ENCODE measurements at regions of chr5 and their contacts with region 1.

Region 1: GRCh38 chr5:109479260-109479860 is 69.6 kb upstream of the PJA2 start:
- DNase-seq: peak; percentile 34
- ATAC-seq: no peak
- H3K4me3 ChIP-seq: no peak overlapping the region
- H3K27ac ChIP-seq: no peak overlapping the region
- H3K4me1 ChIP-seq: no peaks in the 10 kb centered on the region
- H3K27me3 ChIP-seq: peaks cover 3% of the 10 kb centered on the region
- CTCF ChIP-seq: peak; percentile 54
- POLR2A ChIP-seq: no peak
- RAD21 ChIP-seq: peak; percentile 54

Region 2: DNA sequence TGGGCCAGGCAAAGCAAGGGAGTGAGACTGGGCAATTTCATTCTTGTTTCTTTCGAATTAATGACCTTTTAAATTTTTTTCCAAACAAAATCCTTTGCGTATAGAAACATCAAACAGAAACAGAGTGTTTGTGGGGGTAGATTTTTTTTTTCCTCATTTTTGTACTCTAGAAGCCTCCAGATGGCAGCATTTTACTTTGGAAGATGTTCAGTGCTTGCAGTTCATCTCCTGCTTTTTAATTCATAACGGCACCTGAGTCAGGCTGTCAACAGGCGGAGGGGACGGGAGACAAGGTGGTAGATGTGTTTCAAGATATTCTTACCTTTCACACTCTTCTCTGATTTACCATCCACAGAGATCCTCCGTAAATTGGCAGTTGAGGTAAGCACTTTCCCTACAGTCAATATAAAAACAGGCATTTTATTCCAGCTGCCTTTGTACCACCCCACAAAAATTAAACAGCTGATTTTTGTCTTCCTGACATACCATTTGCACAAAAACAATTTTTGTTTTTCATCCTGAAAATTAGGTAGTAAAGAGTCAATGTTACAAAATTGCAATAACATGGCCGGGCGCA is 997.9 kb before region 1 on chr5:
- CTCF ChIA-PET with region 1: no interaction called
- POLR2A ChIA-PET with region 1: no interaction called
- dilution Hi-C with region 1: no loop called
- in situ Hi-C with region 1: no loop called
- intact Hi-C with region 1: loop called (anchors 1 kb)
- DNase-seq: peak; percentile 42
- ATAC-seq: peak; percentile 59; the same call in 1 of the 2 replicates
- H3K4me3 ChIP-seq: no peak overlapping the region
- H3K27ac ChIP-seq: no peak overlapping the region
- H3K4me1 ChIP-seq: no peaks in the 10 kb centered on the region
- H3K27me3 ChIP-seq: no peaks in the 10 kb centered on the region; the same call in 1 of the 2 replicates
- CTCF ChIP-seq: peak; percentile 55
- POLR2A ChIP-seq: no peak
- RAD21 ChIP-seq: peak; percentile 64

Region 3: GRCh38 chr5:108521841-108522506 is 957.4 kb before region 1 on chr5:
- CTCF ChIA-PET with region 1: no interaction called
- POLR2A ChIA-PET with region 1: no interaction called
- dilution Hi-C with region 1: no loop called
- in situ Hi-C with region 1: no loop called
- intact Hi-C with region 1: loop called (anchors 5 kb)
- DNase-seq: peak; percentile 72
- ATAC-seq: peak; percentile 98
- H3K4me3 ChIP-seq: no peak overlapping the region
- H3K27ac ChIP-seq: no peak overlapping the region
- H3K4me1 ChIP-seq: peaks cover 3% of the 10 kb centered on the region
- H3K27me3 ChIP-seq: peaks cover 2% of the 10 kb centered on the region; the same call in 1 of the 2 replicates
- CTCF ChIP-seq: peak; percentile 76
- POLR2A ChIP-seq: no peak
- RAD21 ChIP-seq: peak; percentile 86

Region 4: DNA sequence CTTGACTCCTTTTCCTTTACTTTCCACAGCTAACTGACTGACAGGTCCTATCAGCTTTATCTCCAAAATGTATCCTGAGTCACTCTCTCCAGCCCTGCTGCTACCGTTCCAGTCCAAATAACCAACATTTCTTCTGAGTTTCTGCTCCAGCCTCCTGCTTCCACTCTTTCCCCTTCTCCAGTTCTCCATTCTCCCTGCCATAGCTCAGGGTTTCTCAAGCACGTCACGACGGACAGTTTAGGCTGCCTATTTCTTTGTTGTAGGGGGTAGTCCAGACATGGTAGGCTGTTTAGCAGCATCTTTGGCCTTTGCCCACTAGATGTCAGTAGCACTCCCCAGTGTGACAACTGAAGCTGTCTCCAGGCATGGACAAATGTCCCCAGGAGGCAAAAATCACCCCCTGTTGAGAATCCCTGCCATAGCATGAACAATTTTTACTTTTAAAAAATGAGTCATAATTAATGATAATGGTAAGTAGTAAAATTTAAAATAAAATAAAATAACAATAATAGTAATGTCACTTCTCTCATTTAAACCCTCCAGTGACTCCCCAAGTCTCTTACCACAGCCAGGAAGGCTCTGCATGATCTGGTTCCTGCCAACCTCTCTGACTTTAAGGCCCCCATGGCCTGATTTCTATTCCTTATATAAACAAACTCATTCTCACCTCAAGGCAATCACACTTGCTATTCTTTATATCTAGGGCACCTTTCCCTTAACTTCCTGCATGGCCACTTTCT is 837.0 kb before region 1 on chr5:
- CTCF ChIA-PET with region 1: no interaction called
- POLR2A ChIA-PET with region 1: no interaction called
- dilution Hi-C with region 1: no loop called
- in situ Hi-C with region 1: no loop called
- intact Hi-C with region 1: loop called (anchors 5 kb)
- DNase-seq: peak; percentile 69
- ATAC-seq: peak; percentile 96
- H3K4me3 ChIP-seq: no peak overlapping the region
- H3K27ac ChIP-seq: no peak overlapping the region
- H3K4me1 ChIP-seq: peaks cover 2% of the 10 kb centered on the region; the same call in 1 of the 2 replicates
- H3K27me3 ChIP-seq: no peaks in the 10 kb centered on the region
- CTCF ChIP-seq: peak; percentile 88
- POLR2A ChIP-seq: no peak
- RAD21 ChIP-seq: peak; percentile 89

Region 5: DNA sequence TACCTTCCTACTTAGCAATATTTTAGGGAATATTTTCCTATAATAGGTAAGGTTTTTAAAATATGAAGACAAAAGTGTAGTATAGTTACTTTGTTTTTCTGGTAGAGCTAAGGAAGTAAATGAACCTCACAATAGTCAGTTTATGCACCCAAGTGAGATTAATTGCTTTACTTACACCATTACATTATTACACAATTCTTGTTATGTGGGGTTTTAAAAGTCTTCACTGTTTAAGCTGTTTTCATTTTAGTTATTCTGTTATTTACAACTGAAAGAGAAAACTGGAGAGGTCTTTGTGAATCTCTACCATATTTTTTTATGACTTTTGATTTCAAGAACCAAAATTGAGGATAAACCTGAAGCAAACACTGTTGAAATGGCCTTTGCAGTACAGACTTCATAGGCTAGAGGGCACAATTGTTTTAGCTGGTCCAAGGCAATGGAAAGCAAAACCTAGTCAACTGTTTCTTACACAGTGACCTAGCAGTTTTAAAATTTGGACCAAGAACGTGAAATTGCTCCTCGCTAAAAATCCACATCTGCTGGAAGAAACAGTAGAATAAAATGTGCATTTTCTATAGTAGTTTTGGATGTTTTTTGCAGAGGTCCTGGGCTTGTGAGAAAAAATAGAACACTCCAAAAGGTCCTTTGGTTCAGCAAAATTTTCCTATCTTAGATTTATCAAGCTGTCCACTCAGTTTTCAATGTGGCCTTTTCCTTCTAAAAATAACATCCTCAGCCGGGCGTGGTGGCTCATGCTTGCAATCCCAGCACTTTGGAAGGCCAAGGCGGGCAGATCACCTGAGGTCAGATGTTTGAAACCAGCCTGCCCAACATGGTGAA is 798.1 kb before region 1 on chr5:
- CTCF ChIA-PET with region 1: no interaction called
- POLR2A ChIA-PET with region 1: no interaction called
- dilution Hi-C with region 1: no loop called
- in situ Hi-C with region 1: no loop called
- intact Hi-C with region 1: loop called (anchors 5 kb)
- DNase-seq: peak; percentile 78
- ATAC-seq: peak; percentile 95
- H3K4me3 ChIP-seq: no peak overlapping the region
- H3K27ac ChIP-seq: no peak overlapping the region
- H3K4me1 ChIP-seq: no peaks in the 10 kb centered on the region
- H3K27me3 ChIP-seq: peaks cover 7% of the 10 kb centered on the region
- CTCF ChIP-seq: peak; percentile 89
- POLR2A ChIP-seq: no peak
- RAD21 ChIP-seq: peak; percentile 88

Region 6: DNA sequence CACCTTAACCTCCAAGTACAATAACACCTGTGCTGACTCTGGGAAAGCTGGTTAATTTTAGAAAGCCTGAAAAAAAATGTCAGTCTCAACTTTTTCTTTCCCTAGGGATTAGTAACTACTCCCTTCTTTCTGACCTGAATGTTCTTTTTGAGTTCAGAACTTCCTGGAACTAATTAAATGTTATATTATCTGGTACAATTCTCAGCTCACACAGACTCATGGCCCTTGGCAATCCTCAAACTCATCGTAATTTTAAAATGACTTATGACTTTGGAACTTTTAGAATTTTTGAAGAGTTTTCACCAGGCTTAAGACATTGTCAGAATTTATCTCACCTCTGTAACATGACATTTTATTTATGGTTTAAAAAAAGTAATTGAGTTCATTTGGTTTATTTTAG is 416.7 kb before region 1 on chr5:
- CTCF ChIA-PET with region 1: no interaction called
- POLR2A ChIA-PET with region 1: no interaction called
- dilution Hi-C with region 1: no loop called
- in situ Hi-C with region 1: no loop called
- intact Hi-C with region 1: loop called (anchors 10 kb)
- DNase-seq: no peak
- ATAC-seq: no peak
- H3K4me3 ChIP-seq: no peak overlapping the region
- H3K27ac ChIP-seq: no peak overlapping the region
- H3K4me1 ChIP-seq: no peaks in the 10 kb centered on the region
- H3K27me3 ChIP-seq: no peaks in the 10 kb centered on the region
- CTCF ChIP-seq: no peak
- POLR2A ChIP-seq: no peak
- RAD21 ChIP-seq: no peak

Region 7: GRCh38 chr5:109805472-109805871 is 326.1 kb after region 1 on chr5:
- CTCF ChIA-PET with region 1: no interaction called
- POLR2A ChIA-PET with region 1: interaction called, 12 read pairs
- dilution Hi-C with region 1: no loop called
- in situ Hi-C with region 1: no loop called
- intact Hi-C with region 1: no loop called
- DNase-seq: peak; percentile 33
- ATAC-seq: peak; percentile 81
- H3K4me3 ChIP-seq: no peak overlapping the region
- H3K27ac ChIP-seq: no peak overlapping the region
- H3K4me1 ChIP-seq: peaks cover 4% of the 10 kb centered on the region
- H3K27me3 ChIP-seq: no peaks in the 10 kb centered on the region
- CTCF ChIP-seq: no peak
- POLR2A ChIP-seq: no peak
- RAD21 ChIP-seq: no peak

Region 8: DNA sequence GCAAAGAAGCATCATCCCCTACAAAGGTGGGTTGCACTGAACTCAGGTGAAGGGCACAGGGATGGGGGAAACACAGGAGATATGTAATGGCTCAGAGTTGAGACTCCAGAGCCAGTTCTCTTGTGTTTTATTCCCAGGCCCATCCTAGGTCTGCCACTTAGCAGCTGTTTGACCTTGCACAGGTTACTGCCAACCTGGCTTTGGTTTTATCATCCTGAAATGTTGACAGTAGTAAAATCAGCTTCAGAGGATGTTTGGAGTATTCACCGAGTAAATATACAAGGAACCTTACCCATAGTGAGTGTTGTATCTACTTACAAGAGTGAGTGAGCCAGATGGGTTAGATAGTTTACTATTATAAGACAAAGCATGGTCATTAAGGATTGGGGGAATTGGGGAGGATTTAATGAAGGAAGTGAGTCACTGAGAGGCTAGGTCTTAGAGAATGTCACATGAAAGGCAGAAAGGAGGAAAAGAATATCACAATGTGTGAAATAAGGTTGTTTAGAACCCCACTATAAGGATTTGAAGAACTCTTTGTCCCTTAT is 351.7 kb after region 1 on chr5:
- CTCF ChIA-PET with region 1: no interaction called
- POLR2A ChIA-PET with region 1: no interaction called
- dilution Hi-C with region 1: no loop called
- in situ Hi-C with region 1: no loop called
- intact Hi-C with region 1: no loop called
- DNase-seq: peak; percentile 76
- ATAC-seq: peak; percentile 53
- H3K4me3 ChIP-seq: no peak overlapping the region
- H3K27ac ChIP-seq: peak overlapping the region; percentile 64; the same call in 1 of the 2 replicates
- H3K4me1 ChIP-seq: peaks cover 5% of the 10 kb centered on the region
- H3K27me3 ChIP-seq: no peaks in the 10 kb centered on the region
- CTCF ChIP-seq: no peak
- POLR2A ChIP-seq: no peak
- RAD21 ChIP-seq: no peak

Measured in IMR-90 (cell line).